Dendritic cell treated with granulocyte-macrophage colony-stimulating factor and Interleukin-4, amounts not matched to agents 40 ng/mL and 50 ng/mL, for 4 days (primary cell): ENCODE measurements at regions of chr9 and their contacts with region 1.

Region 1: GRCh38 chr9:26892251-26893029 is at the start of gene CAAP1:
- H3K4me3 Mint-ChIP-seq: peak within 1 kb of the TSS; percentile 94
- H3K27ac Mint-ChIP-seq: peak within 1 kb of the TSS; percentile 99
- H3K4me1 Mint-ChIP-seq: peaks cover 34% of the 10 kb centered on the region
- H3K27me3 Mint-ChIP-seq: no peaks in the 10 kb centered on the region

Region 2: DNA sequence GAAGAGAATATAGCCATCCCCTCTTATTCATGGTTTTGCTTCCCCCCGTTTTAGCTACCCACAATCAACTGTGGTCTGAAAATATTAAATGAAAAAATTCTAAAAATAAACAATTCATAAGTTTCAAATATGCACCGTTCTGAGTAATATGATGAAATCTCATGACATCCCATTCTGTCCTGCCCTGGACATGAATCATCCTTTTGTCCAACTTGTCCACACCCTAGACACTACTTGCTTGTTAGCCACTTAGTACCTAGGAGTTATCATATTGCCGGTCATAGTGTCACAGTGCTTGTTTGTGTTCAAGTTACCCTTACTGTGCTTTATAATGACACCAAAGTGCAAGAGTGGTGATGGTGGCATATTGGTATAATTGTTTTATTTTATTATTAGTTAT is 113.4 kb before region 1 on chr9:
- intact Hi-C with region 1: no loop called
- H3K4me3 Mint-ChIP-seq: no peak overlapping the region
- H3K27ac Mint-ChIP-seq: no peak overlapping the region
- H3K4me1 Mint-ChIP-seq: no peaks in the 10 kb centered on the region
- H3K27me3 Mint-ChIP-seq: no peaks in the 10 kb centered on the region

Region 3: GRCh38 chr9:26809795-26810194 is 82.6 kb before region 1 on chr9:
- intact Hi-C with region 1: no loop called
- H3K4me3 Mint-ChIP-seq: no peak overlapping the region
- H3K27ac Mint-ChIP-seq: no peak overlapping the region
- H3K4me1 Mint-ChIP-seq: no peaks in the 10 kb centered on the region
- H3K27me3 Mint-ChIP-seq: no peaks in the 10 kb centered on the region

Region 4: DNA sequence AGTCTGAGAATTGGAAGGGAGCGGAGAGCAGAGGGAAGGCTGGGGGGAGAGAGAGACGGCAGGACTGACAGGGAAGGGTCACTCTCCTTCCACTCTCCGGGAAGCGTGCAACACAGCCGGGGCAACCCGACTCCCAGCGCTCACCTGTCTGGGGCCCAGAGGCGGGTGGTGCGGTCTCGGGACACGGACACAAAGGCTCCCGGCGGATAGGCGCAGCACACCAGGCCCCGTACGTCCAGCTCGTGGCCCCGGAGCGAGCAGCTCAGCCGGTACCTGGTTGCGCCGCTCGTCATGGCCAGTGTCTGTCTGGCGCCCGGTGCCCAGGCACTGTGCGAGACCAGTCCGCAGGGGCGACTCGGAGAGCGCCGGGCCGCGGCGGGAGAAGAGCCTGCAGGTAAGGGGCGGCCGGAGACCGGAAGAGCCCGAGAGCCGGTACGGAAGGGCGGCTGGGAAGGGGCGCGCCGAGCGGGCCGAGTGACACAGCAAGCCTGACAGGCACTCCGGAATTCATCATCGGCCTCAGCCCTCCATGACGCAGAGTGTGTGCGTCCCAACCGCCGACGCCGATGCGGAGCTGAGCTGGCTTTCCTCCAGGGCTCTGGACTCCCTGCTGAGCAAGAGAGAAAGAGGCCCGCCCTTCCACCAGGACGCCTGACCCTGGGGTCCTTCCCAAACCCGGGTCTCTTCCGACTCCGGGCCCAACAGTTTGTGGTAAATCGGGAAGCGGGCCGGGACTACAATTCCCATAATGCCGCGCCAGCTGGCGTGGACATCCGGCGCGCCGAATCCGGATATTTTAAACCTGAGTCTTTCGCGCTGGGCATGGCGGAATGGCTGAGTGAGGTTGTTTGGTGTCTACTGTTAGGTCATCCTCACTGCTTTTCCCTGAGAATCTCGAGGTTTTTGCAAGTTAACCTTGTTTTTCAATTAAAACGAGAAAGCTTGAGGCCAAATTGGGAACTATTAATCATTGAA is 54.6 kb after region 1 on chr9 and contains the start of gene PLAA:
- intact Hi-C with region 1: loop called (anchors 1 kb)
- H3K4me3 Mint-ChIP-seq: peak within 1 kb of the TSS; percentile 73
- H3K27ac Mint-ChIP-seq: peak within 1 kb of the TSS; percentile 95
- H3K4me1 Mint-ChIP-seq: peaks cover 31% of the 10 kb centered on the region
- H3K27me3 Mint-ChIP-seq: peaks cover 3% of the 10 kb centered on the region

Region 5: DNA sequence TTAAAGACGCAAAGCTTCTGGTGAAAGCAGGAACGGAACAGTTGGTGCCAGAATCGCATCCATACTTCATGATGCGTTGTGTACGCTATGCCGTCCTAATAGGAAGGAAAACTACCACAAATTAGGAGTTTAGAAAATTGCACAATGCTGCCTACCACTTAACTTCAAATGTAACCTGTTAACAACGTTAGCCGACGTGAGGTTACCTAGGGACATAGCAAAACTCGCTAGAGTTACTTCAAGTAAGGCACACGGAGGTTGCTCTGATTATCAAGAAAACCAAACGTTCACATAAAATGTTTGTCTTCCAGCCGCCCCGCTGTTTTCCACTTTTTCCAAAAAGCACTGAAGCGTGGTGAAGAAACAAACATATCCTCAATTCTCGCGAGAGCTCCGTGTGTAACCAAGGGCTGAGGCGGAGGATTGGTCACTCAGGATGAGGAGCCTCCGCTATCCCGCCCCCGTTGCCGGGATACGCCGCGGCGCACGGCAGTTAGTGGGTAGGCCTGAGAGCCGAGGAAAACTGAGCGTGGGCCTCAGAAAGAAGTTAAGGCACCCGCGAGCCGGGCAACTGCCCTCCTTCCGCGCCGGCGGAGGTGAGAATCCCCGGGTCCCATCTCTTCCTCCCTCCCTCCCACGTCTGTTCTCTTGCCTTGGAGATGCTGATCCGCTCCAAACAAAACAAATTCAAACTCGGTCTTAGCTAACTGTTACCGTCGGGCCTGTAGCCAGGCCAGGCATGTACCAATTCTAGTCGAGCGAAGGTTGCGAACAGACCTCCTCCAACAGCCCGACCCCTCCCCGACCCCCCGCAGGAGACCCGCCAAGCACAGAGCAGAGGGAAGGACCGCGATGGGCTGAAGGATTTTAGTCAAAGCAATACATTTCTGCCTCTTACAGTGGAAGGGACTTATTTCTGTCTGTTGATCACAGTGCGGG is 63.8 kb after region 1 on chr9 and contains the start of gene IFT74:
- intact Hi-C with region 1: loop called (anchors 1 kb)
- H3K4me3 Mint-ChIP-seq: peak within 1 kb of the TSS; percentile 86
- H3K27ac Mint-ChIP-seq: peak within 1 kb of the TSS; percentile 99
- H3K4me1 Mint-ChIP-seq: peaks cover 40% of the 10 kb centered on the region
- H3K27me3 Mint-ChIP-seq: no peaks in the 10 kb centered on the region